ENCODE measurements at regions of chr11 and their contacts with region 1.

Region 1: GRCh38 chr11:14413307-14414069 is 54.5 kb upstream of the RRAS2 start:
- DNase-seq: no peak
- H3K4me3 Mint-ChIP-seq: no peak overlapping the region
- H3K27ac Mint-ChIP-seq: peak overlapping the region; percentile 35
- H3K4me1 Mint-ChIP-seq: peaks cover 59% of the 10 kb centered on the region
- H3K27me3 Mint-ChIP-seq: no peaks in the 10 kb centered on the region

Region 2: GRCh38 chr11:14300661-14301304 is 112.7 kb before region 1 on chr11:
- intact Hi-C with region 1: loop called (anchors 2 kb)
- DNase-seq: peak; percentile 31
- H3K4me3 Mint-ChIP-seq: no peak overlapping the region
- H3K27ac Mint-ChIP-seq: no peak overlapping the region
- H3K4me1 Mint-ChIP-seq: peaks cover 6% of the 10 kb centered on the region
- H3K27me3 Mint-ChIP-seq: no peaks in the 10 kb centered on the region

Region 3: GRCh38 chr11:14336507-14337503 is 76.7 kb before region 1 on chr11:
- intact Hi-C with region 1: loop called (anchors 1 kb)
- DNase-seq: no peak
- H3K4me3 Mint-ChIP-seq: no peak overlapping the region
- H3K27ac Mint-ChIP-seq: peak overlapping the region; percentile 80
- H3K4me1 Mint-ChIP-seq: peaks cover 47% of the 10 kb centered on the region
- H3K27me3 Mint-ChIP-seq: no peaks in the 10 kb centered on the region

Region 4: DNA sequence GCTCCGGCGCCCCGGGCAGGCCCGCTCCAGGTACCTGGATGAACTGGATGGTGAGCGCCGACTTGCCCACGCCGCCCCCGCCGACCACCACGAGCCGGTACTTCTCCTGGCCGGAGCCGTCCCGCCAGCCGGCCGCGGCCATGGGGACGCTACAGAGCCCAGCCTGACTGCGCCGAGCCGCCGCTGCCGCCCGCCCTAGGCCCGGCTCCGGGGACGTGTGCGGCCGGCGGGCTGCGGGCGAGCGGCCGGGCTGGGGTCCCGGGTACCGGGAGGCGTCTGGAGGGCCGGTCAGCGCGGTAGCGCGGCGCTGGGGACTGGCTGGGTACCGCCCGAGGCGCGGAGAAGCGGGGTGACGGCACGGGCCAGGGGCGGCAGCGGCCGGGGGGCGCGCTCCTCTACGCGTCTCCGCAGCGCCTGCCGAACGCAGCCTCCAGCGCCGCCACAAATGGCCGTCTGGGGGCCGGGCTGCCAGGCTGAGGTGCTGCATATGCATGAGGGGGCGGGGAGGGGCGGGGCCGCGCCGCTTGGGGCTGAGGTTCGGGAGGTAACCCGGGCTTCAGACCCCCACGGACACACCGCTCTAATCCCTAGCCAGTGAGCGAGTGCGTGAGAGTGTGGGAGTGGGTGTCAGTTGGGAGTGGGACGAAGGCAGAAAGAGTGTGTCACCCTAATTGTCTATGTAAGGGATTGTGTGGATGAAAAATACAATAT is 54.6 kb before region 1 on chr11 and contains the start of gene RRAS2:
- intact Hi-C with region 1: loop called (anchors 5 kb)
- DNase-seq: peak; percentile 74
- H3K4me3 Mint-ChIP-seq: peak within 1 kb of the TSS; percentile 95
- H3K27ac Mint-ChIP-seq: peak within 1 kb of the TSS; percentile 94
- H3K4me1 Mint-ChIP-seq: peaks cover 42% of the 10 kb centered on the region
- H3K27me3 Mint-ChIP-seq: peaks cover 14% of the 10 kb centered on the region
- total RNA-seq, gene RRAS2: 64.4 and 65.2 TPM in 2 replicates

Region 5: DNA sequence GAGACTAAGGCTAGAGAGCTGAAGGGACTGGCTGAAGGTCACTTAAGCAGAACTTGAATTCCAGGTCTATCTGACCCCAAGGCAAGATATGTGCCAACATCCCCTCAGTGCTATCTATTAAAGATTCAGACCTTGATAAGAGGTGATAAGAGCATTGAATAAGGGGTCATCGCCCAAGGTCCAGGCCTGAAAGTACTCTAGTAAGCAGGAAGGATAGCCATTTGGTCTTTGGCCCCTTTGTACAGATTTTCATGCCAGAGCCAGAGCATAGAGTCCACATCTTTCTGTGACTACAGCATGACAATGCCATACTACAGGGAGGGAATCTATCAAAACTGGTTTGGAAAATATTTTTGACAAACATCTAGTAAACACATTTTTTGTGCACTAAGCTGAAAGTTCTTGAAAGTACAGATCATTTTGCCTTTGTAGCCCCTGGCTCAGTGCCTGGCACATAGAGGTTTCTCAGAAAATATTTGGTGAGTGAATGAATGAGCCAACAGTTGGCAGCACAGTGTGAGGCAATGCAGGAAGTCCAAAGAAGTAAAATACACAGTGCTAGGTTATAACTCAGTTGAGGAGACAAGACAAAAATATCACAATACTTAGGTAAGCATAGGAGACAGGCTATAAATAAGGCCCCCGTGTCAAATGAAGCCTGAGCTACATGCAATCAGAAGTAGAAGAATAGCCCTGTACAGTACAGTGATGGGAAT is 39.4 kb before region 1 on chr11:
- intact Hi-C with region 1: loop called (anchors 1 kb)
- DNase-seq: no peak
- H3K4me3 Mint-ChIP-seq: no peak overlapping the region
- H3K27ac Mint-ChIP-seq: peak overlapping the region; percentile 78
- H3K4me1 Mint-ChIP-seq: peaks cover 63% of the 10 kb centered on the region
- H3K27me3 Mint-ChIP-seq: peaks cover 5% of the 10 kb centered on the region

Region 6: GRCh38 chr11:14449302-14449714 is 35.8 kb after region 1 on chr11:
- intact Hi-C with region 1: loop called (anchors 2 kb)
- DNase-seq: no peak
- H3K4me3 Mint-ChIP-seq: no peak overlapping the region
- H3K27ac Mint-ChIP-seq: no peak overlapping the region
- H3K4me1 Mint-ChIP-seq: peaks cover 31% of the 10 kb centered on the region
- H3K27me3 Mint-ChIP-seq: no peaks in the 10 kb centered on the region